ENCODE measurements at regions of chr3 and their contacts with region 1.

Region 1: DNA sequence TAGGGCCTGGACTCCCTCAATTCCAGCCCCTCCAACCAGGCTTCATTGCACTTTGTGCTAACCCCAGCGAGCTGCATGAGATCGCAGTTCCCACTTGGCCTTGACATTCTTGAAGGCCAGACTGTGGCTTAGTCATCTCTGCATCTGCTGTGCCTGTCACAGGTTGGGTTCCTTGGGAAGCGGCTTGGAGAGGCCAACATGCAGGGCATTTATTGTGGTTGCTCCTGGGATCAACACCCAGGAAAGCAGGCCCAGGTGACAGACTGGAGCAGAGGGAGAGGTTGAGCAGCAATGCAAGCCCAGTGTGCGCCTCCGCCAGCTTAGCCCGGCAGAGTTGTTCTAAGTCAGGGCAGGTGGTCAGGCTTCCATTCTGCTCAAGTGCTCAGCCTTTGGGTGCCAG is 10.5 kb downstream of the ABCF3 start:
- DNase-seq: no peak
- ATAC-seq: no peak
- H3K4me3 Mint-ChIP-seq: no peak overlapping the region
- H3K27ac Mint-ChIP-seq: no peak overlapping the region; the same call in 1 of the 2 replicates
- H3K4me1 Mint-ChIP-seq: no peaks in the 10 kb centered on the region
- H3K27me3 Mint-ChIP-seq: no peaks in the 10 kb centered on the region
- CTCF ChIP-seq: no peak

Region 2: DNA sequence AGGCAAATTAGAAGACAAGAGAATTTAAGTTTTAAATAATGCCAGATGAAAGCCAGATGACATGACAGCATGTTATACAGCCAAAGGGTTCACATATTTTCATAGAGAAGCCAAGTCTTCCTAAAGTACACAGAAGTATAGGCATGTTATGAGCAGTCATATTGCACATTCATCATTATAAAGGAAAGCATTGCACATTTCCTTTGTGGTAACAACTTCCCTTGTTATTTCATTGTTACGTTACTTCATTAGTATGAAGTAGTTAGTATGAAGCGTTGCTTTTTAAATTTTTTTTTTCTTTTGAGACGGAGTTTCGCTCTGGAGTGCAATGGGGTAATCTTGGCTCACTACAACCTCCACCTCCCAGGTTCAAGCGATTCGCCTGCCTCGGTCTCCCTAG is 174.2 kb before region 1 on chr3:
- CTCF ChIA-PET with region 1: no interaction called
- POLR2A ChIA-PET with region 1: no interaction called
- DNase-seq: no peak
- ATAC-seq: no peak
- H3K4me3 Mint-ChIP-seq: no peak overlapping the region
- H3K27ac Mint-ChIP-seq: no peak overlapping the region
- H3K4me1 Mint-ChIP-seq: 0 out of 2 replicates have a peak, but pooled peaks cover 2% of the 10 kb centered on the region
- H3K27me3 Mint-ChIP-seq: no peaks in the 10 kb centered on the region
- CTCF ChIP-seq: no peak

Region 3: GRCh38 chr3:184110316-184110725 is 86.2 kb before region 1 on chr3:
- CTCF ChIA-PET with region 1: no interaction called
- POLR2A ChIA-PET with region 1: interaction called, 11 read pairs
- DNase-seq: no peak
- ATAC-seq: no peak; the same call in 1 of the 2 replicates
- H3K4me3 Mint-ChIP-seq: no peak overlapping the region
- H3K27ac Mint-ChIP-seq: peak overlapping the region; percentile 4; the same call in 1 of the 2 replicates
- H3K4me1 Mint-ChIP-seq: peaks cover 6% of the 10 kb centered on the region
- H3K27me3 Mint-ChIP-seq: no peaks in the 10 kb centered on the region
- CTCF ChIP-seq: no peak

Region 4: DNA sequence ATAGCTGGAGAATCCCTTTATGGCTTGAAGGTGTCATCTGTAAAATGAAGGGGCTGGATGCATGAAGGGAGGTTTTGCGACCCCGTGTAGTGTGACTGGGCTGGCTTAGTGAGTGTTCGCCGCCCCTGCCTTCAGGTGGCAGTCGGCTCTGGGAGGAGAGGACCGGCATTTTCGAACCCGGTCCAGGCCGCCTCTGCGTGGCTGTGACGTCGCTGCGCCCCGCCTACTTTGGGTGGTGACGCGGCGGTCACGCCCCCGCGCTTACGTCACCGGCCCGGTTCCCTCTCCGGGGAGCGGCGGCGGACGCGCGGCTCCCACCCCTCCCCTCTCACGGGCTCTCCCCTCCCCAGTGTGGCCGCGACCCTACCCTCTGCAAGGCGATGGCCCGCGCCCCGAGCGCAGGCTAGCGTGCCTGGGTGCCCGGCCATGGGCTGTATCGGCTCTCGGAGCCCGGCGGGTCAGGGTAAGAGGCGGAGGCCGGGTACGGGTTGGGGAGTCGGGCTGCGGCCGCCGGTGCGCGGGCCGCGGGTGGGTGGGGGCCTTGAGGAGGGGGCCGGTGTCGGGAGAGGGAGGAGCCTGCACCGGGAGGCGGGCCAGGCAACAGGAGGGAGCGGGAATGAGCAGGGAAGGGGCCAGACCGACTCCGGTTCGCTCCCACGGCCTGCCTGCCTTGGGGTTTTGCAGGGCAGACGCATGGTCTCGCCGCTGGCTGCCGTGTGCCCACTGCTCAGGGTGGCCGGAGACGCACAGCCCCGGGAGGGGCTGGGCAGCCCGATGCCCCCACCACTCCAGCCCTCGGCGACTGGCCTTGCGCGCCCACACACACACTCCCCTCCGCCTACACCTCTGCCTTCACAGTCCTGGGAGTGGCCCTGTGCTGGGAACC is 139.4 kb after region 1 on chr3:
- CTCF ChIA-PET with region 1: no interaction called
- POLR2A ChIA-PET with region 1: no interaction called
- DNase-seq: peak; percentile 94
- ATAC-seq: peak; percentile 63
- H3K4me3 Mint-ChIP-seq: peak overlapping the region; percentile 92
- H3K27ac Mint-ChIP-seq: peak overlapping the region; percentile 95
- H3K4me1 Mint-ChIP-seq: peaks cover 36% of the 10 kb centered on the region
- H3K27me3 Mint-ChIP-seq: no peaks in the 10 kb centered on the region
- CTCF ChIP-seq: no peak